ENCODE measurements at regions of chr14 and their contacts with region 1.

Region 1: DNA sequence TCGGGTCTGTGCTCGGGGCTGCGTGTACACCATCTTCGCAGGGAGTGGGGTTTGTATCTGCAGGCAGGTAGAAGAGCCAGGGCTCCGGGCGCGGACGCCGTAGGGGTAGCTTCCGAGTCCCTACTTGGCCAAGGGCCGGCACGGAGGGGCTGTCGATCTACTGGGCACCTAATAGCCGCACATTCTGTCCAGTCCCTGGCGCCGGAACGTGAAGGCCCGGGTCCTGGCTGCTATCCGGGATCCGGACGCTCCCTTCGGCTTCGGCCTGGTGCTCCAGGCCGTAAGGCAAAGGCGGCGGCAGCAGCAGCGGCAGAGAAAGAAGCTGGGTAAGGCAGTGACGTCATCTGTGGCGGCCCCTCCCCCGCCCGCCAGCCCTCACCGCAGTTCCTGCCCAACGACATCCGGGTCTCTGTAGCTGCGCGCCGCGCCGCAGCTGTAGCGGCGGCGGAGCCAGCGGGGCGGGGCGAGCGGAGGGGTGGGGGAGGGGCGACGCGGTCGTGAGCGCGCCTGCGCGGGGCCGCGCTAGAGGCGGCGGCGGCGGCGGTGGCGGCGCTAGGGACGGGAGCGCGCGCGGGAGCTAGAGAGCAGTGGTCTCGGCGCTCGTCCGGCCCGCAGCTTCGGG is at the start of gene PPM1A:
- DNase-seq: peak; percentile 95
- H3K4me3 Mint-ChIP-seq: peak within 1 kb of the TSS; percentile 87
- H3K27ac Mint-ChIP-seq: peak within 1 kb of the TSS; percentile 99
- H3K4me1 Mint-ChIP-seq: peaks cover 45% of the 10 kb centered on the region
- H3K27me3 Mint-ChIP-seq: no peaks in the 10 kb centered on the region
- total RNA-seq, gene PPM1A: 54.5 to 55.2 TPM

Region 2: DNA sequence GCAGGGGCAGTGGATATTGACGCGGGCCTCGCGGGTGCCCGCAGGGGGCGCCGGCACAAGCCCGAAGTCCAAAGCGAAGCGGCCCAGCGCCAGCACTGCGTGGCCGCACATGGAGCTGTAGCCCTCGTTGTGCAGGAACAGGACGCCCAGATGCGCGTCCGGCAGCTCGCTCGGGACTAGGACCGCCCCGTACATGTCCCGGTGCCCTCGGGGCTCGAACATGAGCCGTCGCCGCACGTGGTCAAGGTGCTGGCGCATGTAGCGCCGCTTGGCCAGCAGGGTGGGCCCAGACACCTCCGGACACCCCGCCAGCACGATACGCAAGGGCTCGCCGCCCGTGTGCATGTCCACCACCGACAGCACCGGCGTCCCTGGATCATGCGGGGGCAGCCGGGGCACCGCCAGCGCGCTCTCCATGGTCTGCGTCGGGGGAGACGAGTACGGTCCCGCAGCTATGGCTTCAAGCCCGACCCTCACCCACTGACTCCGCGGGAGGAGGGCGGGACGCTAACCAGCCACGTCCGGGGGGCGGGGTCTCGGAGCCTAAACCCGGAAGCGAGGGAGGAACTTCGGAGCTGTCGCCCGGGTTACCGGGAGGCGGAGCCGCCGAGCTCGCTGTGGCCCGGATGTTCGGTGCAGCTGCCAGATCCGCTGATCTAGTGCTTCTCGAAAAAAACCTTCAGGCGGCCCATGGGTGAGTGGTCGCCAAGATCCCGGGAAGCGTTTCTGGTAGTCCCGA is 764.7 kb before region 1 on chr14 and contains the starts of genes JKAMP and L3HYPDH:
- CTCF ChIA-PET with region 1: no interaction called
- POLR2A ChIA-PET with region 1: interaction called, 13 read pairs
- DNase-seq: peak; percentile 97
- H3K4me3 Mint-ChIP-seq: peak within 1 kb of the TSS; percentile 94
- H3K27ac Mint-ChIP-seq: peak within 1 kb of the TSS; percentile 88
- H3K4me1 Mint-ChIP-seq: peaks cover 67% of the 10 kb centered on the region
- H3K27me3 Mint-ChIP-seq: no peaks in the 10 kb centered on the region
- total RNA-seq, gene JKAMP: 31.1 to 31.5 TPM
- total RNA-seq, gene L3HYPDH: 15.6 to 17.4 TPM

Region 3: DNA sequence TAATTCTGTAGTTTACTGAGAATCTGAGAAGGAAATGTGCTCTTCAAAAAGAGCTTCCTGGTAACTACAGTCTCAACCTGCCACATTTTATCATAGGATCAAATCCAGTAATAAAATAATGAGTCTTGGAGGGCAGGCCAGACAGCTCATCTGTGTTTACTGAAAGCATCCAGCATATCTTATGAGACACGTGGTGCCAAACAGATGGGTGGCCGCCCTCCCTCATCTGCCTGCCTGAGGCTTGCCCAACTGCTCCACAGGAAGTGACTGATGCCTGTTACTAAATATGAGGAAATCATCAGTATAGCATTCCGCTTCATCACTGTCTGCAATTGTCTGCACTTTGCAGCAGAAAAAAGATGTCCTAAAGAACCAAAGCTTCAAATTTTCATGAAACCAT is 97.1 kb before region 1 on chr14:
- CTCF ChIA-PET with region 1: no interaction called
- POLR2A ChIA-PET with region 1: interaction called, 12 read pairs
- DNase-seq: peak; percentile 77
- H3K4me3 Mint-ChIP-seq: no peak overlapping the region
- H3K27ac Mint-ChIP-seq: peak overlapping the region; percentile 81
- H3K4me1 Mint-ChIP-seq: peaks cover 43% of the 10 kb centered on the region
- H3K27me3 Mint-ChIP-seq: no peaks in the 10 kb centered on the region

Region 4: GRCh38 chr14:60184146-60184904 is 64.5 kb before region 1 on chr14:
- CTCF ChIA-PET with region 1: interaction called, 13 read pairs
- POLR2A ChIA-PET with region 1: interaction called, 5 read pairs
- DNase-seq: no peak
- H3K4me3 Mint-ChIP-seq: peak overlapping the region; percentile 45
- H3K27ac Mint-ChIP-seq: peak overlapping the region; percentile 2
- H3K4me1 Mint-ChIP-seq: peaks cover 12% of the 10 kb centered on the region
- H3K27me3 Mint-ChIP-seq: peaks cover 1% of the 10 kb centered on the region

Region 5: DNA sequence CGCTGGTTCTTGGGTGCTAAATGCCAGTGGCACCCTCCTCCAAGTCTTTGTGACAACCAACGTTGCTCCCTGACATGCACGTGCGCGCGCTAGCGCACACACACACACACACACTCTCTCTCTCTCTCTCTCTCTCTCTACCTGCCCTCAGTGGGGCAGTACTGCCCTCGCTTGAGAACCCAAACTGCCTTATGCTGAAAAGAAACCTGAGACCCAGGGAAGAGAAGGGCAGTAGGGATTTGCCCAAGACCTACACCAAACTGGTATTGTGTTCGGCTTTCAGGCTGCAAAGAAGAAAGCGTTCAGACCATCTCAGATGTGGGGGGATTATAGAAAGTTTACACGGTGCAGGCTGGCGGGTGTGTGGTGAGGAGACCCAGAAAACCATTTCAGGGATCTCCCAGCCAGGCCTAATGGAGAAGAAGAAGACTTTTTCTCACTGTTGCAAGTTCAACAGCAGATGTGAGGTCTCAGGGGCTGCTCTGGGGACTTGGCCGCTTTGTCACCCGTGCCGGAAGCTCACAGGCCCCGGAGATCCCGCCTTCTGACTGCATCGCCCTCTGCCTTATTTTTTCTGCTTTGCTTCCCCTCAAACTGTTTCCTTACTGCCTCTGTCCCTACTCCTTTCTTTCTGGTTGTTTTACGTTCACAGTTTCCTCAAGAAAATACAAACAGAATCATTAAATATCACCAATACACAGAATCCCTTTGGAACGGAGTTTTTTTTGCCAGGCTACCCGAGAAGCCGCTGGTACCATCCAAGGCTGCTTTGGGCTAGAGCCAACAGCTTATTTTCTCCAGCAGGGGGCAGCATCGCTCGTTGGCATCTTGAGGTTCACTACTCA is 82.6 kb after region 1 on chr14:
- CTCF ChIA-PET with region 1: interaction called, 20 read pairs
- POLR2A ChIA-PET with region 1: interaction called, 28 read pairs
- DNase-seq: peak; percentile 81
- H3K4me3 Mint-ChIP-seq: peak overlapping the region; percentile 76
- H3K27ac Mint-ChIP-seq: peak overlapping the region; percentile 80
- H3K4me1 Mint-ChIP-seq: peaks cover 31% of the 10 kb centered on the region
- H3K27me3 Mint-ChIP-seq: peaks cover 33% of the 10 kb centered on the region